ENCODE measurements at regions of chr1 and their contacts with region 1.

Region 1: DNA sequence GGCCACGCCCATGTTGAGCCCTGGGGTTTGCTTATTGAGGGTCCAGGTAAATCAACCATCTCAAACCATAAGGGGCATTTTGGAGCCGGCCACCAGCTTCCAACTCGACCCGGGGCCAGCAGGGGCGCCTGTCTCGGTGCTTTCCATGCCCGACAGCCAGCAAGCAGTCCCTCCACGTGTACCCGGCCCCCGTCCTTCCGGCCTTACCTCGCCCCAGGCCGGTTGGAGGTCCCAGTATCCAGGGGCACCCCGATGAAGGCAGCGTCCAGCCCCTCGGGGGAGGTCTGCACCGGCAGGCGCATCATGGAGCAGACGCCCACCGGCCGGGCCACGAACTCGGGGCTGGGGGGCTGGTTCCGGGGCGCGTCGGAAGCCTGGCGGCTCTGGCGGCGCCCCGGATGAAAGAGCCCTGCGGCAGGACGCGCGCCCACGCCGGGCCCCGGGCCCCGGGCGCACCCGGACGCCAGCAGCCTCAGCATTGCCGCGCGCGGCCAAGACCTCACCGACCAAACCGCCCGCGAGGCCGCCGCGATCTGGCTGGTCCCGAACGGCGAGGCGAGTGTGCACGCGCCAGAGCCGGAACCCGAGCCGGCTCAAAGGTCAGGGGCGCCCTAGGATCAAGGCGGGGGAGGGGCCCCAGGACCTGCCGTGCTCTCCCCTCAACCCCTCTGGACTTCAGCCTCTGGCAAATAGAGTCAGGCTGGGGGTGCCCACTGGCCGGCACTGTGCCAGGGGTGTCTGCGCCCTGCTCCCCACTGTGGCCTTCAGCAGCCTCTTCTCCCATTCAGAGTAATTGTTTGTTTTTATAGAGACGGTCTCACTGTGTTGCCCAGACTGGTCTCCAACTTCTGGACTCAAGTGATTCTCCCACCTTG is at the start of gene AGMAT:
- DNase-seq: peak; percentile 82
- ATAC-seq: peak; percentile 80
- H3K4me3 Mint-ChIP-seq: peak within 1 kb of the TSS; percentile 77
- H3K27ac Mint-ChIP-seq: peak within 1 kb of the TSS; percentile 89
- H3K4me1 Mint-ChIP-seq: peaks cover 20% of the 10 kb centered on the region
- H3K27me3 Mint-ChIP-seq: no peaks in the 10 kb centered on the region
- total RNA-seq, gene AGMAT: 18.1 to 24.0 TPM

Region 2: GRCh38 chr1:15684468-15685291 is 100.0 kb after region 1 on chr1:
- CTCF ChIA-PET with region 1: no interaction called
- POLR2A ChIA-PET with region 1: interaction called, 8 read pairs
- intact Hi-C with region 1: loop called in 1 of 2 experiments (anchors 1 kb)
- DNase-seq: peak; percentile 60
- ATAC-seq: peak; percentile 37
- H3K4me3 Mint-ChIP-seq: peak overlapping the region; percentile 86
- H3K27ac Mint-ChIP-seq: peak overlapping the region; percentile 92
- H3K4me1 Mint-ChIP-seq: peaks cover 53% of the 10 kb centered on the region
- H3K27me3 Mint-ChIP-seq: no peaks in the 10 kb centered on the region